Activated CD8-positive, alpha-beta T cell treated with anti-CD3 and anti-CD28 coated beads, Interleukin-2, amount 10 ng/mL, durations not matched to agents 7 days and 5 days (primary cell): ENCODE measurements at regions of chr6 and their contacts with region 1.

Region 1: GRCh38 chr6:83067448-83068413 is at the start of gene DOP1A:
- DNase-seq: peak; percentile 97
- ATAC-seq: peak; percentile 92
- H3K4me3 Mint-ChIP-seq: peak within 1 kb of the TSS; percentile 90
- H3K27ac Mint-ChIP-seq: peak within 1 kb of the TSS; percentile 89
- H3K4me1 Mint-ChIP-seq: peaks cover 44% of the 10 kb centered on the region
- H3K27me3 Mint-ChIP-seq: no peaks in the 10 kb centered on the region
- total RNA-seq, gene DOP1A: 14.9 to 18.9 TPM

Region 2: GRCh38 chr6:82240191-82240590 is 827.5 kb before region 1 on chr6:
- CTCF ChIA-PET with region 1: interaction called, 11 read pairs
- POLR2A ChIA-PET with region 1: no interaction called
- DNase-seq: no peak
- ATAC-seq: no peak
- H3K4me3 Mint-ChIP-seq: no peak overlapping the region
- H3K27ac Mint-ChIP-seq: no peak overlapping the region
- H3K4me1 Mint-ChIP-seq: peaks cover 13% of the 10 kb centered on the region
- H3K27me3 Mint-ChIP-seq: no peaks in the 10 kb centered on the region

Region 3: GRCh38 chr6:83047065-83047754 is 20.5 kb before region 1 on chr6:
- CTCF ChIA-PET with region 1: interaction called, 53 read pairs
- POLR2A ChIA-PET with region 1: no interaction called
- DNase-seq: no peak
- ATAC-seq: no peak
- H3K4me3 Mint-ChIP-seq: no peak overlapping the region
- H3K27ac Mint-ChIP-seq: no peak overlapping the region
- H3K4me1 Mint-ChIP-seq: no peaks in the 10 kb centered on the region
- H3K27me3 Mint-ChIP-seq: no peaks in the 10 kb centered on the region

Region 4: GRCh38 chr6:83169511-83169910 is 101.8 kb after region 1 on chr6:
- CTCF ChIA-PET with region 1: interaction called, 60 read pairs
- POLR2A ChIA-PET with region 1: no interaction called
- DNase-seq: no peak
- ATAC-seq: no peak
- H3K4me3 Mint-ChIP-seq: no peak overlapping the region
- H3K27ac Mint-ChIP-seq: no peak overlapping the region
- H3K4me1 Mint-ChIP-seq: no peaks in the 10 kb centered on the region
- H3K27me3 Mint-ChIP-seq: no peaks in the 10 kb centered on the region

Region 5: GRCh38 chr6:83198486-83199172 is 130.9 kb after region 1 on chr6:
- CTCF ChIA-PET with region 1: interaction called, 105 read pairs
- POLR2A ChIA-PET with region 1: no interaction called
- DNase-seq: no peak
- ATAC-seq: no peak
- H3K4me3 Mint-ChIP-seq: no peak overlapping the region
- H3K27ac Mint-ChIP-seq: no peak overlapping the region
- H3K4me1 Mint-ChIP-seq: peaks cover 6% of the 10 kb centered on the region
- H3K27me3 Mint-ChIP-seq: peaks cover 6% of the 10 kb centered on the region

Region 6: DNA sequence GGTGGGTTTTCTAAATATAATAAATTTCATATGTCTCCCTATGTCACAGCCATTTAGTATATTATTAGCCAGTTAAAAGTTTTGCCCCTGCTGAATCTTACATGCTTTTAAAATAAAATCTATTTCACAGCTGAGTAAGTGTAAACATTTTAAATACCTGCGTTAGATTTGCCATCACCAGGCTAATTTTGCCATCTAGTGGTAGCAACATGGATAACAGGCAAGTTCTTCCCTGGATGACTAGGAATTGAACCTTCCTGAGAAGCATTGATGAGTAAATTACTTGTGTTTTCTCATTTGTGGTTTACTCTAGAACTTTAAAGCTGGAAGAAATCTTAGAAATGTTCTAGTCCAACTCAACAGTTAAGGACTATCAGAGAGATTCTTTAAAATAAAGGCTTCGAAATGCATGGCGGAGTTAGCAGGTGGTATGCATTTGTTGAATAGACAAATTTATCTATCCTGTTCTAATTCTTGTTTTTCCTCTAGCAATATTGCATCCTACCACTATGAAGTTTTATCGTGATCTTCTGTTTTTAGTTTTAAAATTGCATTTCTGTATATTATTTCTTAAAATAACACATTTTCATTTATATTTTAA is 447.2 kb after region 1 on chr6:
- CTCF ChIA-PET with region 1: interaction called, 58 read pairs
- POLR2A ChIA-PET with region 1: no interaction called
- DNase-seq: peak; percentile 46
- ATAC-seq: no peak
- H3K4me3 Mint-ChIP-seq: no peak overlapping the region
- H3K27ac Mint-ChIP-seq: no peak overlapping the region
- H3K4me1 Mint-ChIP-seq: peaks cover 6% of the 10 kb centered on the region
- H3K27me3 Mint-ChIP-seq: peaks cover 27% of the 10 kb centered on the region

Region 7: DNA sequence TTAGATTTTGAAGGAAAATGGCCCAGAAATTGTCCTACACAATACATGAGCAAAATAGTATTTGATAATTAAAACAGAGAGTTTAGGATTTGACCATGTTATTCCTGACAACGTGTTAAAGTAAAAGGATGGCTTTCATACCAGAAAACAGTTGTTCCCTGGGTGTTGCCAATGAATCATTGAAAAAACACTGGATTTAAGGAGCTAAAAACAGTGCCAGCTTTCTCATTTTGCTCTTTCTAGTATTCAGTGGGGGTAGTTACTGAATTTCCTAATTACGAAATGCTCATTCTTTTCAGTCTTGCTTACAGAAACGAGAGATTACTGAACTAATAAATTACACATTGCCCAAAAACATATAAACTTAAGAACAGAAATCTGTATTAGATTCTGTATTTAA is 667.7 kb after region 1 on chr6:
- CTCF ChIA-PET with region 1: no interaction called
- POLR2A ChIA-PET with region 1: no interaction called
- DNase-seq: no peak
- ATAC-seq: no peak
- H3K4me3 Mint-ChIP-seq: no peak overlapping the region
- H3K27ac Mint-ChIP-seq: no peak overlapping the region
- H3K4me1 Mint-ChIP-seq: no peaks in the 10 kb centered on the region
- H3K27me3 Mint-ChIP-seq: no peaks in the 10 kb centered on the region